AG04449 (cell line): ENCODE measurements at regions of chr18 and their contacts with region 1.

Region 1: GRCh38 chr18:63848159-63848558 is 39.3 kb upstream of the SERPINB2 start:
- DNase-seq: no peak
- H3K4me3 ChIP-seq: no peak overlapping the region
- CTCF ChIP-seq: peak; percentile 57

Region 2: GRCh38 chr18:63859781-63860475 is 11.8 kb after region 1 on chr18:
- CTCF ChIA-PET with region 1: interaction called, 16 read pairs
- POLR2A ChIA-PET with region 1: no interaction called
- DNase-seq: no peak
- H3K4me3 ChIP-seq: no peak overlapping the region
- CTCF ChIP-seq: no peak

Region 3: DNA sequence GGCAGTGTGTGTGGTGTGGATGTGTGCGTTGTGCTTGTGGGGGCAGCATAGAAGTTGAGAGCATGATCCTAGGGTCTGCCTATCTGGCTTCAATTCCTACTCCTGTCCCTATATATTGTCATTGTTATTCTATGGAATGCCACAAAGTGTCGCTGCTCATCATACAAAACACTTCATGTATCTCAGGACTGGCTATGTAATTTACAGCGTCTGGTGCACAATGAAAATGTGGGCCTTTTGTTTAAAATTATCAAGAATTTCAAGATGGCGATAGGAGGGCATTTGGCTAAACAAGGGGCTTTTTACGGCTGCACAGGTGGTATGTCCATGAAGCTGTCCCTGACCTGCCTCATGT is 42.8 kb after region 1 on chr18:
- CTCF ChIA-PET with region 1: no interaction called
- POLR2A ChIA-PET with region 1: no interaction called
- DNase-seq: no peak
- H3K4me3 ChIP-seq: no peak overlapping the region
- CTCF ChIP-seq: no peak

Region 4: DNA sequence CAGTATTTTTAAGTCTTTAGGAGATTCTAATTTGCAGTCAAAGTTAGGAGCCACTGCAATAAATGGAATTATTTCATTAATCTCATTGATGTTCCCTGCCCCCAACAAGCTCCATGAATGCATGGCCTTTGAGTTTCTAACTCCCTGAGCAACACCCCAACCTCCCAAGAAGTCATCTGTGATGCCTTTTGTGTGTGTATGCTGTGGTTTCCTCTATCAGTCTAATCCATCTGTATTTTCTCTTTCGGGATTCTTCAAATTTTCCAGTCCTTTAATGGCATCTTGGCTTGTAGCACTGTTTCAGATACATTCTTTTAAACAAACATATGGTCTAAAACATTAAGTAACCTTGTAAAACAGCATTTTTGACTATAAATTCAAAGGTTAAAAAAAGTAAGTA is 76.4 kb after region 1 on chr18:
- CTCF ChIA-PET with region 1: no interaction called
- POLR2A ChIA-PET with region 1: no interaction called
- DNase-seq: peak; percentile 71
- H3K4me3 ChIP-seq: no peak overlapping the region
- CTCF ChIP-seq: no peak

Region 5: DNA sequence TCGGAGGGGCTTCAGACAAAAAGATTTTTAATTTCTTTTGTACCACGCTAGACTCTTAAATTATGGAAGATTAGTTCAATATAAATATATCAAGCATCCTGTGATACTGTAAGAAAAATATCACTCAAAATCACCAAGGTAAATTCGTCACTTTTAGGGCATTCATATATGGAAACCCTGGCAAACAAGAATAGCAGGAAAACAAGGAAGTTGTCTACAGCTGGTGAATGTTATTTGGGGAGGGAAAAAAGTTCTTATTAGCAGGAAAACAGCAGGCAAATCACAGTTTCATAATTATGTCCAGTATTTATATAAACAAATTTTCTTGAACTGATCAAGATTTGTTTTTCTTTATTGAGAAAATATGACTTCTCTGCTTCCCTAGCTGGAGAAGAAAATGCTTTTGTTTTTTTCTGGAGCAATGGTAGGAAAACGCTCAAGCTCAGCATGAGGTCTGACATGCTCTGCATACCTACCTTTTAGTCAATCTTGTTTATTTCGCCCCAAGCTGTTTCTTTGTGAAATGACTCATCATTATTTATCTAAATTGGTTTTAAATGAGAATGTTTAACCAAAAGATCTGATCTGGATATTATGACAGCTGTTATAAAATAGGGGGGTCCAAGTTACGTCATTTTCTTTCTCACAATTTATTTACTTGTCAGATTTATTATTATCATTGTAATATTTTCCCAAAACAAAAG is 286.0 kb after region 1 on chr18:
- CTCF ChIA-PET with region 1: no interaction called
- POLR2A ChIA-PET with region 1: no interaction called
- DNase-seq: no peak
- H3K4me3 ChIP-seq: no peak overlapping the region
- CTCF ChIP-seq: no peak